HCT116 (cell line): ENCODE measurements at regions of chr1 and their contacts with region 1.

Region 1: DNA sequence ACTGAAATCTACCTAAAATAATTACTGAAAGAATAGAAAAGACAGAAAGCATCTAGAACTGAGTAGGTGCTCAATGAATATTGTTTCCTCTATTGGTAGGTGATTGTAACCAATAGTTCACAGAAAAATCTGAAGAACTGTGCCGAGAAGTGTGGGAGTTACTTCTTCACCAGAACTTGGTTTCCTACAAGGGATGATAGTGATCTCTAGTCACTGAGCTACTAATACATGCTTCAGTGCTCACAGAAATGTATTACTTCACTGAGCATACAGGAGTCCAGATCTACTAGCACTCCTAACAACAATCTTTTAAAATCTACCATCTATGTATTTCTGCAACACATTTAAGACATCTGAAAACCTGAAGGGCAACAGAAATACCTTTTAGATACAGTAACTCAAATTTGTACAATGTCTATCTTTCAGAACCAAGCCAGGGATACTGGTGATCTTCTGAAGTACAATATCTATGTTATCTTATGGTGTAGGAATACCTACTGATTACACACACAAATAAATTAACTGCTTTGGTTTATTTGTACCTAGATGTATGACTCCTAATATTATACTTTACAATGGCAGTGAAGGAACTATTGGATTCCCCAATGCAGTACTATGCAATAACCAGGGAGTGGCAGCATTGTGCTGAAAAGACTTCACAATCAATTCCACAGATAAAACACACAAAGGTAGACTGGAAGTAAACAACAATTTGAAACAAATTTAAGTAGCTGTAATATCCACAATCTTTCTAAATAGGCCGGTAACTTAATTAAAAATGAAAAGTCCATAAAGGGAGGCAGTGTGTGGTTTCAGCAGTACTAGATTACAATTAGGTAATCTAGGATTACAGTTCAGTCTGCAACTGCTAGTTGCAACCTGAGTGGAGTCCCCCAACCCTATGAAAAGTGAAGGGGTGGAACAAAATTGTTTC is 243.0 kb downstream of the SLC45A1 start:
- DNase-seq: peak; percentile 16
- ATAC-seq: peak; percentile 79
- H3K4me3 ChIP-seq: no peak overlapping the region
- H3K27ac ChIP-seq: no peak overlapping the region
- H3K4me1 ChIP-seq: peaks cover 5 to 16% of the 10 kb centered on the region in 2 experiments; a peak in 3 of 4 replicates
- H3K27me3 ChIP-seq: no peaks in the 10 kb centered on the region
- CTCF ChIP-seq: peak; percentile 81 to 96 (median 84)
- POLR2A ChIP-seq: no peak
- RAD21 ChIP-seq: peak; percentile 88

Region 2: GRCh38 chr1:8604041-8604945 is 43.4 kb after region 1 on chr1:
- CTCF ChIA-PET with region 1: no interaction called
- POLR2A ChIA-PET with region 1: no interaction called
- RAD21 ChIA-PET with region 1: no interaction called
- intact Hi-C with region 1: no loop called
- DNase-seq: no peak
- ATAC-seq: no peak
- H3K4me3 ChIP-seq: no peak overlapping the region
- H3K27ac ChIP-seq: no peak overlapping the region
- H3K4me1 ChIP-seq: peaks cover 9 to 13% of the 10 kb centered on the region in 2 experiments; a peak in 2 of 4 replicates
- H3K27me3 ChIP-seq: no peaks in the 10 kb centered on the region
- CTCF ChIP-seq: no peak
- POLR2A ChIP-seq: no peak
- RAD21 ChIP-seq: no peak

Region 3: GRCh38 chr1:8671306-8671917 is 110.5 kb after region 1 on chr1:
- CTCF ChIA-PET with region 1: interaction called, 6 read pairs
- POLR2A ChIA-PET with region 1: no interaction called
- RAD21 ChIA-PET with region 1: no interaction called
- intact Hi-C with region 1: loop called (anchors 1 kb)
- DNase-seq: peak; percentile 22
- ATAC-seq: peak; percentile 69
- H3K4me3 ChIP-seq: no peak overlapping the region
- H3K27ac ChIP-seq: no peak overlapping the region
- H3K4me1 ChIP-seq: peaks cover 4 to 9% of the 10 kb centered on the region in 2 experiments
- H3K27me3 ChIP-seq: no peaks in the 10 kb centered on the region
- CTCF ChIP-seq: peak; percentile 61 to 79 (median 75); a peak in 5 of 6 replicates
- POLR2A ChIP-seq: no peak
- RAD21 ChIP-seq: peak; percentile 74

Region 4: DNA sequence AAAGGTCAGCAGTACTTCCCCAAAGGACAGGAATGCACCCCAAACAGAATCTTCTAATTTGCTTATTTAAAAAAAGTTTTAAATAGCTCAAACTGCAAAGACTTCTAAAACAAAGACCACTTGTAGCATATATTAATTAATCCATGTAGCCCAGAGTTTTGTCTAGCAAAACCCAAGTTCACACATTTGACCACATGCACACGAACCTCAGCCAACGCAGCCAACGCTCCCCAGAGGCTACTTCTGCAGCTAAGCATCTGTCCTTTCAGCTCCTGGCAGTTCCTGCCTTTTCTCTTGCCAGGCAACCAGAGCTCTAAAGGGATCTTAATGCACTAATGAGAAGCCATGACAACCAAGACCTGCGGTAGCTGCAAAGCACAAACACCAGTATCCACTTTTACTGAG is 166.9 kb after region 1 on chr1:
- CTCF ChIA-PET with region 1: interaction called, 26 read pairs
- POLR2A ChIA-PET with region 1: no interaction called
- RAD21 ChIA-PET with region 1: interaction called in 1 of 2 experiments, 3 read pairs
- intact Hi-C with region 1: loop called (anchors 1 kb)
- DNase-seq: no peak
- ATAC-seq: no peak
- H3K4me3 ChIP-seq: no peak overlapping the region
- H3K27ac ChIP-seq: no peak overlapping the region
- H3K4me1 ChIP-seq: peaks cover 0 to 5% of the 10 kb centered on the region in 2 experiments; a peak in 2 of 4 replicates
- H3K27me3 ChIP-seq: no peaks in the 10 kb centered on the region
- CTCF ChIP-seq: no peak
- POLR2A ChIP-seq: no peak
- RAD21 ChIP-seq: no peak